CD4-positive, alpha-beta T cell (primary cell): ENCODE measurements at regions of chr12 and their contacts with region 1.

Region 1: GRCh38 chr12:9064201-9064814 is 51.4 kb downstream of the A2M start:
- DNase-seq: peak; percentile 24 to 77 (median 44)
- ATAC-seq: peak; percentile 93
- H3K4me3 ChIP-seq: peak overlapping the region; percentile 60
- H3K4me3 Mint-ChIP-seq: peak overlapping the region; percentile 76
- H3K27ac ChIP-seq: no peak overlapping the region
- H3K27ac Mint-ChIP-seq: no peak overlapping the region
- H3K4me1 ChIP-seq: peaks cover 15% of the 10 kb centered on the region
- H3K4me1 Mint-ChIP-seq: peaks cover 11% of the 10 kb centered on the region
- H3K27me3 ChIP-seq: no peaks in the 10 kb centered on the region
- H3K27me3 Mint-ChIP-seq: no peaks in the 10 kb centered on the region
- CTCF ChIP-seq: peak; percentile 48

Region 2: DNA sequence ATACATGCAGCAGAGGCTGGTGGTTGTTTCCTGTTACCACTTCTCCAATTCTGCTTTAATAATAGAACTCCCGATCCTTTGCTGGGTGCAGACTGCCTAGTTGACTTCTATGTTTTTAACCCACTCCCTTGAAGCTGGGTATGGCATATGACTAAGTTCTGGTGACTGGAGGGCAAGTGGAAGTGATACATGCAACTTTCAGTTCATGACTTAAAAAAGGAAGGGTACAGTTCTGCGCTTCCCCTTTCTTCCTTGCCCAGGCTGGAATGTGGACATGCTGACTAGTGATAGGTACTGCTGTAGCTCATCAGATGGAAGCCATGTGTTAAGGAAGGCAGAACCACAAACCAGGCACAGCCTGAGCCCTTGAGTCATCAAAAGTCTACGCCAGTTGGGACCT is 53.9 kb after region 1 on chr12:
- CTCF ChIA-PET with region 1: no interaction called
- POLR2A ChIA-PET with region 1: no interaction called
- intact Hi-C with region 1: no loop called
- DNase-seq: peak in 3 of 14 experiments; percentile 29 to 74 (median 64)
- ATAC-seq: peak; percentile 32
- H3K4me3 ChIP-seq: no peak overlapping the region
- H3K4me3 Mint-ChIP-seq: no peak overlapping the region
- H3K27ac ChIP-seq: no peak overlapping the region
- H3K27ac Mint-ChIP-seq: no peak overlapping the region
- H3K4me1 ChIP-seq: peaks cover 6% of the 10 kb centered on the region
- H3K4me1 Mint-ChIP-seq: peaks cover 12% of the 10 kb centered on the region
- H3K27me3 ChIP-seq: no peaks in the 10 kb centered on the region
- H3K27me3 Mint-ChIP-seq: no peaks in the 10 kb centered on the region
- CTCF ChIP-seq: no peak

Region 3: DNA sequence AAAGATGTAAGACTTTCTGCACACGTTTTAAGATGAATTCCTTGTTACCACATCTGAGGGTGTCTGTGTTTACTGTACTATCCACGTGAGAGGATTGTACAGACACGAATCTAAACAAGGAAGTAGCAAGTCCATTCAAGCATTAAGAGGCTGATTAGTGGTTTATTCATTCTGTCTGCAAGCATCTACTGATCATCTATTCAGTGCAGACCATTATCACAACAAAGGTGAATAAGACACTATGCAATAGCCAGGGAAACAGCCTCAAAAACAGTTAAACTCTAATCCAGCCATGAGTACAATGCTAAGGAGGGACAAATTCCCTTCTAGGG is 255.5 kb after region 1 on chr12:
- CTCF ChIA-PET with region 1: no interaction called
- POLR2A ChIA-PET with region 1: no interaction called
- intact Hi-C with region 1: loop called in 1 of 2 experiments (anchors 10 kb)
- DNase-seq: no peak
- ATAC-seq: no peak
- H3K4me3 ChIP-seq: no peak overlapping the region
- H3K4me3 Mint-ChIP-seq: no peak overlapping the region
- H3K27ac ChIP-seq: no peak overlapping the region
- H3K27ac Mint-ChIP-seq: no peak overlapping the region
- H3K4me1 ChIP-seq: no peaks in the 10 kb centered on the region
- H3K4me1 Mint-ChIP-seq: no peaks in the 10 kb centered on the region
- H3K27me3 ChIP-seq: no peaks in the 10 kb centered on the region
- H3K27me3 Mint-ChIP-seq: no peaks in the 10 kb centered on the region
- CTCF ChIP-seq: no peak